Right cardiac atrium (tissue), 5 donors: ENCODE measurements at regions of chr10 and their contacts with region 1.

Region 1: GRCh38 chr10:93080350-93081046 is 6.8 kb downstream of the CYP26A1 start:
- DNase-seq: peak in 2 of 3 donors; percentile 57 to 77
- ATAC-seq: peak; percentile 66 to 75
- H3K4me3 ChIP-seq: no peak overlapping the region
- H3K27ac ChIP-seq: no peak overlapping the region
- H3K4me1 ChIP-seq: no peaks in the 10 kb centered on the region
- H3K27me3 ChIP-seq: no peaks in the 10 kb centered on the region

Region 2: DNA sequence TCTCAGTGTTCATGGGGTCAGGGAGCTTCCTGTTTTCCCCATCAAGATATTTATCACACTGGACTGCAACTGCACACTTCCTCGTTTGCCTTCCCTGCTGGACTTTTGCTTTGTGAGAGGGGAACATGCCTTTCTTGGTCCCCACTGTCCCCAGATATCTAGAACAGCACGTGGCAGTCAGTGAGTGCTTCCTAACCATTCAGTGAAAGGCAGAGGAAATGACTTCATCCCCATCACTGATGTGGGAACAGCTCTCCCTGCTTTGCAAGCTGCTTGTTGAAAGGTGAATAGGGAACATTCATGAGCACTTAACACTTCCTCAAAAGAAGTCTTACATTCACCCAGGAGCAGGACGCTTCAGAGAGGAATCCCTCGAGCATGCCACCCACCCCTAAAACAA is 266.2 kb after region 1 on chr10:
- intact Hi-C with region 1: loop called (anchors 5 to 10 kb)
- DNase-seq: no peak
- ATAC-seq: no peak
- H3K4me3 ChIP-seq: no peak overlapping the region
- H3K27ac ChIP-seq: no peak overlapping the region
- H3K4me1 ChIP-seq: no peaks in the 10 kb centered on the region
- H3K27me3 ChIP-seq: no peaks in the 10 kb centered on the region